ENCODE measurements at regions of chrX and their contacts with region 1.

Region 1: GRCh38 chrX:107672955-107673378 is 44.7 kb downstream of the PRPS1 start:
- DNase-seq: peak; percentile 31 to 86
- ATAC-seq: peak; percentile 42 to 54
- H3K4me3 ChIP-seq: no peak overlapping the region; the same call in 2 of the 3 replicates
- H3K27ac ChIP-seq: peak overlapping the region; percentile 34 to 73; a peak in 4 of 6 replicates
- H3K4me1 ChIP-seq: peaks cover 40% of the 10 kb centered on the region
- CTCF ChIP-seq: peak; percentile 56
- EP300 ChIP-seq: no peak
- POLR2A ChIP-seq: no peak
- RAD21 ChIP-seq: peak; percentile 76

Region 2: GRCh38 chrX:107522901-107523300 is 150.1 kb before region 1 on chrX:
- CTCF ChIA-PET with region 1: no interaction called
- POLR2A ChIA-PET with region 1: no interaction called
- DNase-seq: no peak
- ATAC-seq: no peak
- H3K4me3 ChIP-seq: no peak overlapping the region
- H3K27ac ChIP-seq: no peak overlapping the region
- H3K4me1 ChIP-seq: no peaks in the 10 kb centered on the region
- CTCF ChIP-seq: no peak
- EP300 ChIP-seq: no peak
- POLR2A ChIP-seq: no peak
- RAD21 ChIP-seq: no peak

Region 3: DNA sequence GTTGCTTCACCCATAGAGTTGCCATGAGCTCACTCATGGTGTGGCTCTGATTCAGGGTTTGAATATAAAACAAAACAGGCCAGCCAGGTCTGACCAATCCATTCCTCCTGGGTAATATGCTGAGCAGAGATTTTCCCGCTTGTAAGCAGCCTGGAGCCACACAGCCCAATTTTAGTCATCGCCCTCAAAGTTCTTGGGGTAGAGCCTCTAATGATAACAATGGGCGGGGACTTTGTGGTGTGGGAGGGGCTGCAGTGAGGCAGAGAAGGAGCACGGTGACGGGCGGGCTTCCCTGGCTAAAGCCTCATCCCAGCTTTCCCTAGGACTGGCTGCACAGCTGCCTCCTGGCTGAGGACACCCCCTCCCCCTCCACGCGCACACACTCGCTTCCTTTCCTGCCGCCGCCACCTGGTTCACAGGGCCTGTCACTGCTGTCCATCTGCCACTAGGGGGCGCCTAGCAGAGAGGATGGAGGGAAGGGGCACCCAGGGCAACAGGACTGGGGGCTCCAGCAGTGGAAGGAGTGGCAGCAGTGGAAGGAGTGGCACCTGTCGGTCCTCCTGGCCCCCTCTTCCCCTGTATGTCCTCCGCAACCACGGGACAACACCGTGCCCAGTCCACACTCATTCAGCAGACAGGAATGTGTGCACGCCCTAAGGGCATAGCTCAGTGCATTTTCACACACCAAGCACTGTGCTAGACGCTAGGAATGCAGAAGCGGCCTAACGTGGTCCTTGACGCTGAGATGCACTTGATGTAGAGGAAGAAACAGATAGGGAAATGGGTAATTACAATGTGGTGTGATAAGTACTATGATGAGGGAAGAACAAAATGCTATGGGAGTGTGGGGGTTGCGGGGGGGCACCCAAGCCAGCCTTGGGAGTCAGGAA is 17.9 kb before region 1 on chrX:
- CTCF ChIA-PET with region 1: interaction called, 70 read pairs
- POLR2A ChIA-PET with region 1: no interaction called
- DNase-seq: peak in 1 of 2 experiments; percentile 59
- ATAC-seq: peak; percentile 79 to 81
- H3K4me3 ChIP-seq: no peak overlapping the region
- H3K27ac ChIP-seq: no peak overlapping the region
- H3K4me1 ChIP-seq: peaks cover 12% of the 10 kb centered on the region; the same call in 2 of the 3 replicates
- CTCF ChIP-seq: peak; percentile 52; the same call in 2 of the 3 replicates
- EP300 ChIP-seq: no peak
- POLR2A ChIP-seq: no peak
- RAD21 ChIP-seq: peak in 1 of 2 experiments; percentile 8; a peak in 1 of 5 replicates

Region 4: DNA sequence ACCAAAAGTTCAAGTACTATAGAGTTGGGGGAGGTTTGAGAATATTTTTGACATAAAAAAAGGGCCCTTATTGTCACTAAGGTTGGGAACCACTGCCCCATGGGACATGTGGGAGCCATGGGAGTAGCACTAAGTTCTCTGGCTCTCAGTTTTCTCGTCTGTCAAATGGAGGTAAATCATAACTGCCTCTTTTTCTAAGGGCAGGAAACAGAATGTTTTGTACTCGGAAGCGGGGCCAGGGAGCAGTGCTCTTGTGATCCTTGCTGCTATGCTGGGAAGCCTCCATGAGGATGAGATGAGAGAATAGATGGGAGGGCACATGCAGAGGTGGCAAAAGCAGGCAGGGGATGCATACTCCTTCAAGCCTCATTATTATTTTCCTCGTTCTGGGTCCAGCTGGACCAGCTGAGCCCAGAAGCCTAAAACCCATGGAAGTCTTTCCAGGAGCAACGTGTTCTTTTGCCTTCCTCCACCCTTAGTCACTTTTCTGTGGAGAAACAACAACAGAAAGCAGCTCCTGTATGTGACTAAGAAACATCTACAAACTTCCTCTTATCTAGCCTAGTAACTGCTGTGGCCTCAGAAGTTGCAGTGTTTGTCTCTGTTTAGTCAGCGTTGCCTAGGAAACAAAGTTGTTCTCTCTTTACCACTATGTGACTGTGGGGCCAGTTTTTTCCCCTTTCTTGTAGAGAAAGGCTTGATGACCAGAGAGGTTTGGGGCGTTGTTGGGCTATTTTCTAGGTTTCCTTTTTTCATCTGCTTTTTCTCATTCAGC is 37.8 kb after region 1 on chrX:
- CTCF ChIA-PET with region 1: interaction called, 92 read pairs
- POLR2A ChIA-PET with region 1: interaction called, 57 read pairs
- DNase-seq: peak; percentile 76 to 84
- ATAC-seq: peak; percentile 77 to 84
- H3K4me3 ChIP-seq: no peak overlapping the region
- H3K27ac ChIP-seq: peak overlapping the region; percentile 77 to 79
- H3K4me1 ChIP-seq: peaks cover 35% of the 10 kb centered on the region
- CTCF ChIP-seq: no peak
- EP300 ChIP-seq: no peak
- POLR2A ChIP-seq: no peak
- RAD21 ChIP-seq: no peak

Region 5: GRCh38 chrX:107716816-107717700 is 44.1 kb after region 1 on chrX:
- CTCF ChIA-PET with region 1: interaction called, 92 read pairs
- POLR2A ChIA-PET with region 1: interaction called, 57 read pairs
- DNase-seq: peak; percentile 71 to 88
- ATAC-seq: peak; percentile 81 to 83
- H3K4me3 ChIP-seq: peak overlapping the region; percentile 84
- H3K27ac ChIP-seq: peak overlapping the region; percentile 89
- H3K4me1 ChIP-seq: peaks cover 37% of the 10 kb centered on the region
- CTCF ChIP-seq: no peak
- EP300 ChIP-seq: no peak
- POLR2A ChIP-seq: peak; percentile 76
- RAD21 ChIP-seq: no peak

Region 6: GRCh38 chrX:107741404-107741790 is 68.4 kb after region 1 on chrX:
- CTCF ChIA-PET with region 1: interaction called, 11 read pairs
- POLR2A ChIA-PET with region 1: no interaction called
- DNase-seq: no peak
- ATAC-seq: no peak
- H3K4me3 ChIP-seq: no peak overlapping the region
- H3K27ac ChIP-seq: peak overlapping the region; percentile 69; a peak in 2 of 6 replicates
- H3K4me1 ChIP-seq: peaks cover 14% of the 10 kb centered on the region
- CTCF ChIP-seq: no peak
- EP300 ChIP-seq: no peak
- POLR2A ChIP-seq: no peak
- RAD21 ChIP-seq: no peak

Region 7: GRCh38 chrX:107766470-107767150 is 93.6 kb after region 1 on chrX:
- CTCF ChIA-PET with region 1: interaction called, 10 read pairs
- POLR2A ChIA-PET with region 1: no interaction called
- DNase-seq: no peak
- ATAC-seq: peak; percentile 57 to 81
- H3K4me3 ChIP-seq: no peak overlapping the region
- H3K27ac ChIP-seq: no peak overlapping the region
- H3K4me1 ChIP-seq: peaks cover 9% of the 10 kb centered on the region
- CTCF ChIP-seq: no peak
- EP300 ChIP-seq: no peak
- POLR2A ChIP-seq: no peak
- RAD21 ChIP-seq: no peak